Heart left ventricle (tissue), 16 donors: ENCODE measurements at regions of chr11 and their contacts with region 1.

Region 1: DNA sequence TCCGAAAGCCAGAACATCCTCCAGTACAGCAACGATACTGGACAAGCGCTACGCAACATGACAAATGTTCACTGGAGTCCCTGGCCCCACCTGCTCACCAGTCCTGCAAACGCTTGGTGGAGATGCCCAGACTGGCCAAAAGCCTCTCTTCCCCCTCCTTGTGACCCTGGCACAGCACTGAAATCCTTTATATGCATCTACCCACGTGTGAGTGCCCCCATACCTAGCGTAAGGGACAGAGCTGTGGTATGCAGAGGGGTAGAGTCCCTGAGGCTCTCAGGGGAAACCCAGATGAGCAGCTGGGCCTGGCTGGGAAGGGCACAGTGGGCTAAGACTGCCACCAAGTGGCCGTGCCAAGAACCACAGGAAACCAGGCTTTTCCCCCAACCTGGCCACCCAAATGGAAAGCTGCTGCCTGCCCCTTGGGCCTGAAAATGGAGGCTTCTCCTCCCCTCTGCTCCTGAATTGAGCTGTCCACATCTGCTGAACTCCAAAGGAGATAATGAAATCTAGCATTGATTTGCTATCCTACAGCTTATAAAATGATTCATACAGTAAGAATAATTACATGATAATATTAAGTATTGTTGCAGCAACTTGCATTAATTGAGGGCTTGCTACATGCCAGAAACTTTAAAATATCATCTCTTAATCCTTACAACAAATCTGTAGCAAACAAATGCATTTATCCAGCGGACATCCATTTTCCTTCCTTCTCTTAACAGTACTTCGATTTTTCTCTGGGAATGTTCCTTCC is 24.8 kb upstream of the TTC12 start:
- DNase-seq: peak; percentile 42 to 77 (median 54)
- ATAC-seq: peak; percentile 73 to 79 (median 77)
- H3K4me3 ChIP-seq: no peak overlapping the region
- H3K27ac ChIP-seq: no peak overlapping the region
- H3K4me1 ChIP-seq: peaks cover 0 to 9% (median 0%) of the 10 kb centered on the region in 12 donors
- H3K27me3 ChIP-seq: peaks cover 0 to 8% (median 0%) of the 10 kb centered on the region in 9 donors
- CTCF ChIP-seq: peak; percentile 79 to 93 (median 88)
- POLR2A ChIP-seq: no peak

Region 2: GRCh38 chr11:112795142-112795815 is 494.3 kb before region 1 on chr11:
- intact Hi-C with region 1: loop called in 1 of 10 experiments (anchors 10 kb)
- DNase-seq: no peak
- ATAC-seq: peak in 2 of 4 donors; percentile 47 to 50
- H3K4me3 ChIP-seq: no peak overlapping the region
- H3K27ac ChIP-seq: peak overlapping the region in 4 of 12 donors; percentile 19 to 42 (median 29)
- H3K4me1 ChIP-seq: peaks cover 0 to 39% (median 14%) of the 10 kb centered on the region in 12 donors
- H3K27me3 ChIP-seq: no peaks in the 10 kb centered on the region
- CTCF ChIP-seq: peak; percentile 21 to 63 (median 47)
- POLR2A ChIP-seq: no peak

Region 3: DNA sequence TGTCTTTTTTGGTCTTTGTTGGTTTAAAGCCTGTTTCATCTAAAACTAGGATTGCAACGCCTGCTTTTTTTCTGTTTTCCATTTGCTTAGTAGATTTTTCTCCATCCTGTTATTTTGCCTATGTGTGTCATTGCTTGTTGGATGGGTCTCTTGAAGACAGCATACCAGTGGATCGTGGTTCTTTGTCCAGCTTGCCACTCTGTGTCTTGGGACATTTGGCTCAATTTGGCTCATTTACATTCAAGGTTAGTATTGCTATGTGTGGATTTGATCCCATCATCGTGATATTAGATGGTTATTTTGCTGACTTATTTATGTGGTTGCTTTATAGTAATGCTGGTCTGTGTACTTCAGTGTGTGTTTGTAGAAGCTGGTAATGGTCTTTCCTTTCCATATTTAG is 66.6 kb after region 1 on chr11:
- intact Hi-C with region 1: no loop called
- DNase-seq: no peak
- ATAC-seq: no peak
- H3K4me3 ChIP-seq: no peak overlapping the region
- H3K27ac ChIP-seq: no peak overlapping the region
- H3K4me1 ChIP-seq: no peaks in the 10 kb centered on the region
- H3K27me3 ChIP-seq: no peaks in the 10 kb centered on the region
- CTCF ChIP-seq: no peak
- POLR2A ChIP-seq: no peak

Region 4: DNA sequence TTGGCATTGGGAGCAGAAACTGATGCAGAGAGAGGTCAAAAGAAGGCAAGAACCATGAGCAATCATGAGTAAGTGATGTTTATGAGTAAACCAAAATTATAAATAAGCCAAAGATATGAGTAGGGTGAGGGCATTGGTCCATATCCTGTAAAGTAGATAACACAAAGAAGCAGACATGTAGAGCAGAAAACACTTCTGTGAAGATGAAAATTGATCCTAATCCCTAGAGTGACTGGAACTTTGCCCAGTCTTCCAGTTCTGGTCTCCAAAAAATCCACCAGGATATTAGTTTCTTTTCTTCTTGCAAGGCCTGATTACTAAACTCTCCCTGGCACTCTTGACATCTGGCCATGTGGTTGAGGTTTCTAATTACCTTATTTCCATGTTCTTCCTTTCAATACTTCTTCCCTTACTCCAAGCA is 199.3 kb after region 1 on chr11:
- intact Hi-C with region 1: no loop called
- DNase-seq: no peak
- ATAC-seq: no peak
- H3K4me3 ChIP-seq: no peak overlapping the region
- H3K27ac ChIP-seq: no peak overlapping the region
- H3K4me1 ChIP-seq: no peaks in the 10 kb centered on the region
- H3K27me3 ChIP-seq: peaks cover 0 to 5% (median 0%) of the 10 kb centered on the region in 9 donors
- CTCF ChIP-seq: no peak
- POLR2A ChIP-seq: no peak